ENCODE measurements at regions of chr7 and their contacts with region 1.

Region 1: GRCh38 chr7:151429548-151430331 is 10.2 kb downstream of the CRYGN start:
- DNase-seq: peak; percentile 52 to 55
- H3K4me3 ChIP-seq: no peak overlapping the region
- H3K27ac ChIP-seq: peak overlapping the region; percentile 55
- H3K4me1 ChIP-seq: peaks cover 44% of the 10 kb centered on the region
- H3K27me3 ChIP-seq: no peaks in the 10 kb centered on the region
- CTCF ChIP-seq: no peak

Region 2: GRCh38 chr7:151408839-151409666 is 20.7 kb before region 1 on chr7:
- CTCF ChIA-PET with region 1: interaction called, 6 read pairs
- POLR2A ChIA-PET with region 1: interaction called, 3 read pairs
- intact Hi-C with region 1: loop called (anchors 1 kb)
- DNase-seq: peak in 1 of 2 experiments; percentile 68
- H3K4me3 ChIP-seq: no peak overlapping the region
- H3K27ac ChIP-seq: no peak overlapping the region
- H3K4me1 ChIP-seq: peaks cover 9% of the 10 kb centered on the region
- H3K27me3 ChIP-seq: peaks cover 9% of the 10 kb centered on the region; the same call in 1 of the 2 replicates
- CTCF ChIP-seq: no peak

Region 3: GRCh38 chr7:151448261-151449252 is 18.8 kb after region 1 on chr7:
- CTCF ChIA-PET with region 1: interaction called, 12 read pairs
- POLR2A ChIA-PET with region 1: no interaction called
- intact Hi-C with region 1: loop called (anchors 1 kb)
- DNase-seq: peak; percentile 43 to 77
- H3K4me3 ChIP-seq: peak overlapping the region; percentile 53
- H3K27ac ChIP-seq: no peak overlapping the region
- H3K4me1 ChIP-seq: no peaks in the 10 kb centered on the region
- H3K27me3 ChIP-seq: no peaks in the 10 kb centered on the region
- CTCF ChIP-seq: peak; percentile 83

Region 4: GRCh38 chr7:151796871-151797270 is 367.1 kb after region 1 on chr7:
- CTCF ChIA-PET with region 1: no interaction called
- POLR2A ChIA-PET with region 1: no interaction called
- intact Hi-C with region 1: loop called (anchors 1 kb)
- DNase-seq: peak; percentile 41 to 49
- H3K4me3 ChIP-seq: no peak overlapping the region
- H3K27ac ChIP-seq: peak overlapping the region; percentile 63
- H3K4me1 ChIP-seq: peaks cover 27% of the 10 kb centered on the region
- H3K27me3 ChIP-seq: no peaks in the 10 kb centered on the region
- CTCF ChIP-seq: no peak